Transverse colon (tissue), 4 donors: ENCODE measurements at regions of chr10 and their contacts with region 1.

Region 1: GRCh38 chr10:104784452-104784851 is 143.4 kb downstream of the SORCS3 start:
- DNase-seq: no peak
- H3K4me3 ChIP-seq: no peak overlapping the region
- H3K27ac ChIP-seq: no peak overlapping the region
- H3K4me1 ChIP-seq: no peaks in the 10 kb centered on the region
- H3K27me3 ChIP-seq: no peaks in the 10 kb centered on the region
- CTCF ChIP-seq: no peak
- EP300 ChIP-seq: no peak
- POLR2A ChIP-seq: no peak

Region 2: DNA sequence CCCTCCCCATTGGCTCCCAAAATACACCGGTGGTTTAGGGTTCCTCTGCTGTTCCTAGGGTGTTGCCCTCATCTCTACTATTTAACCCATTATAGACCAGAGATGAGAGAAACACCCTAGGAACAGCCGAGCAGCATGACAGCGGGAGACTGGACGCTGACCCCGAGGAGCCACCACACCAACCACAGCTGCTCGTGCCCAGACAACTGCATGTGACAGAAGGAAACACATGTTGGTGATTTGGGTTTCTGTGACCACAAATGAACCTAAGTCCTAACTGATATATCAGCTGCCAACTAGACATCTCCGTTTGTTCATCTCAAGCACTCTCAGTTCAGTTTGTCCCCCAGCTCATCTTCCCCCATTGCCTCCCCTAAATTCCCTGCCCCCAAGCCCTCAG is 565.7 kb before region 1 on chr10:
- in situ Hi-C with region 1: no loop called
- intact Hi-C with region 1: no loop called
- DNase-seq: no peak
- H3K4me3 ChIP-seq: no peak overlapping the region
- H3K27ac ChIP-seq: no peak overlapping the region
- H3K4me1 ChIP-seq: peaks cover 0 to 4% (median 0%) of the 10 kb centered on the region in 4 donors
- H3K27me3 ChIP-seq: no peaks in the 10 kb centered on the region
- CTCF ChIP-seq: no peak
- EP300 ChIP-seq: no peak
- POLR2A ChIP-seq: no peak

Region 3: DNA sequence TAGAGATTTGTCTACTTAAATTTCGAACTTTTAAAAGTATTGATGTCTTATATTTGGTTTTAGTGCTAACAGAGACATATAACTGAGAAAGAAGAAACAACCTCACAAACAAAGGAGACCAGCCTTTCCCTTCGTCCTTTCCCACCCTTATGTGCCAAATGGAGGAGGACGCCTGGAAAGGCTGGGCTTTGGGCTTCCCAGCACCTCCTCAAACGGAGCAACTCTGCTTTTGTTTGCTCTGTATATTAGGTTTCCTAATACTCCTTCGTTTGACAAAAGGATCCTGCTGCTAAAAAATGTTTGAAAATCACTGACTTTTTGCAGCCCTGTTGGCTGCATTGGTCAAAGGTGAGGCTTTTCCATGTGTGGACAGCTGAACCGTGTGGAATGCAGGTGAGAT is 328.4 kb after region 1 on chr10:
- in situ Hi-C with region 1: no loop called
- intact Hi-C with region 1: loop called (anchors 5 kb)
- DNase-seq: no peak
- H3K4me3 ChIP-seq: no peak overlapping the region
- H3K27ac ChIP-seq: no peak overlapping the region
- H3K4me1 ChIP-seq: no peaks in the 10 kb centered on the region
- H3K27me3 ChIP-seq: no peaks in the 10 kb centered on the region
- CTCF ChIP-seq: no peak
- EP300 ChIP-seq: no peak
- POLR2A ChIP-seq: no peak